ENCODE measurements at regions of chr10 and their contacts with region 1.

Region 1: GRCh38 chr10:78335691-78336401 is 302.2 kb downstream of the RPS24 start:
- DNase-seq: peak; percentile 56
- ATAC-seq: peak; percentile 33
- H3K4me3 ChIP-seq: no peak overlapping the region
- H3K27ac ChIP-seq: no peak overlapping the region
- H3K4me1 ChIP-seq: no peaks in the 10 kb centered on the region; the same call in 1 of the 2 replicates
- H3K27me3 ChIP-seq: peaks cover 37% of the 10 kb centered on the region
- CTCF ChIP-seq: no peak

Region 2: GRCh38 chr10:77746047-77746707 is 589.7 kb before region 1 on chr10:
- CTCF ChIA-PET with region 1: no interaction called
- POLR2A ChIA-PET with region 1: interaction called, 23 read pairs
- intact Hi-C with region 1: no loop called
- DNase-seq: peak; percentile 74
- ATAC-seq: peak; percentile 86
- H3K4me3 ChIP-seq: no peak overlapping the region
- H3K27ac ChIP-seq: no peak overlapping the region
- H3K4me1 ChIP-seq: no peaks in the 10 kb centered on the region
- H3K27me3 ChIP-seq: no peaks in the 10 kb centered on the region
- CTCF ChIP-seq: no peak

Region 3: DNA sequence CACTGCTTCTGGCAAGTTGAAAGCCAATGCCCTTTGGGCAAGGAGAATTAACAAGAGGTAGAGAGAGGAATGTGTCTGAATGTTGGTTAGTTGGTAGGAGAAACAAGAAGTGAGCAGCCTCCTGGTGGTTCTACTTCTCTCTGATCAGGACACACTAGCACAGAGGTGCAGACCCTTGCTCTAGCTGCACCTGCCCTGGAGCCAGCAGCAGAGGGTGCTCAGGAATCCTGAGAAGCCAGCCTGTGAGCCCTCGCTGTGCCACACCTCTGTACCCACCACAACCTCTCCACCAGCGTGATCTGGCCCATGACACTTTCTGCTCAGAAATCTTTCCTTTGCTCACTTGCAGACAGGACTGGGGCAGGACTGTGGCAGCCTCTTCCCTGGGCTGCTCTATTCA is 62.5 kb after region 1 on chr10:
- CTCF ChIA-PET with region 1: no interaction called
- POLR2A ChIA-PET with region 1: no interaction called
- intact Hi-C with region 1: loop called (anchors 10 kb)
- DNase-seq: no peak
- ATAC-seq: peak; percentile 39; the same call in 1 of the 2 replicates
- H3K4me3 ChIP-seq: no peak overlapping the region
- H3K27ac ChIP-seq: no peak overlapping the region
- H3K4me1 ChIP-seq: no peaks in the 10 kb centered on the region
- H3K27me3 ChIP-seq: peaks cover 70% of the 10 kb centered on the region
- CTCF ChIP-seq: peak; percentile 37; the same call in 1 of the 2 replicates